ENCODE measurements at regions of chr7 and their contacts with region 1.

Region 1: GRCh38 chr7:10412422-10413019 is 561.2 kb upstream of the PHF14 start:
- DNase-seq: no peak
- H3K4me3 ChIP-seq: no peak overlapping the region
- H3K27ac ChIP-seq: no peak overlapping the region
- H3K4me1 ChIP-seq: no peaks in the 10 kb centered on the region
- H3K27me3 ChIP-seq: no peaks in the 10 kb centered on the region
- CTCF ChIP-seq: peak; percentile 37 to 71 (median 62)
- EP300 ChIP-seq: no peak
- POLR2A ChIP-seq: no peak

Region 2: DNA sequence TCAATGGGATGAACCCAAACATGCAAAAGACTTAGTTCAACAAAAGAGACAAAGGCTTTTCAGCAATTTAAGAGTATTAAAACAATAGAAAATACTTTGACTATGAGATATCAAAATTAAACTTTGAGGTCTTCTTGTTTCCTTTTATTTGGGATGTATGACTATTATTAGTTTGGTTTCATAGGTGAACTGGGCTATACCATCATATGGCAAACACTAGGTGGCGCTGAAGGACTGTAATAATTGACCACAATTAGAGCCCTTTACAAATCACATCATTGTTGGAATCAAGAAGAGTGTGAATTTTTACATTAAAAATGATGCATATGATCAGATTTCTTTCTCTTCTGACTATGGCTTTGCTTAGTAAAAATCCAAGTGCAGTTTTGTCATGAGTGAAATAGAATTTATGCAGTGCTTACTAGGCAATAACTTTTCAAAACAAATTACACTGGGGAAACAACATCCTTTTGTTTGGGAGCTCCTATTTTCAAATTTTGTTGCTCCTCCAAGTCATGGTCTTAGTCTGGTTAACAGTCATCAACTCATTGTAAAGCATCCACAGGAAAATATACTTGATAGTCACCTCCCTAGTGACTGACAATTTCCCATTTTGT is 1993.8 kb before region 1 on chr7:
- intact Hi-C with region 1: loop called (anchors 5 kb)
- DNase-seq: no peak
- H3K4me3 ChIP-seq: no peak overlapping the region
- H3K27ac ChIP-seq: no peak overlapping the region
- H3K4me1 ChIP-seq: no peaks in the 10 kb centered on the region
- H3K27me3 ChIP-seq: peaks cover 0 to 10% (median 0%) of the 10 kb centered on the region in 4 donors
- CTCF ChIP-seq: peak; percentile 55 to 72 (median 58)
- EP300 ChIP-seq: no peak
- POLR2A ChIP-seq: no peak

Region 3: GRCh38 chr7:10507032-10507431 is 94.5 kb after region 1 on chr7:
- intact Hi-C with region 1: no loop called
- DNase-seq: no peak
- H3K4me3 ChIP-seq: no peak overlapping the region
- H3K27ac ChIP-seq: no peak overlapping the region
- H3K4me1 ChIP-seq: no peaks in the 10 kb centered on the region
- H3K27me3 ChIP-seq: no peaks in the 10 kb centered on the region
- CTCF ChIP-seq: no peak
- EP300 ChIP-seq: no peak
- POLR2A ChIP-seq: no peak

Measured in esophagus muscularis mucosa (tissue), 4 donors.